ENCODE measurements at regions of chr2 and their contacts with region 1.

Region 1: DNA sequence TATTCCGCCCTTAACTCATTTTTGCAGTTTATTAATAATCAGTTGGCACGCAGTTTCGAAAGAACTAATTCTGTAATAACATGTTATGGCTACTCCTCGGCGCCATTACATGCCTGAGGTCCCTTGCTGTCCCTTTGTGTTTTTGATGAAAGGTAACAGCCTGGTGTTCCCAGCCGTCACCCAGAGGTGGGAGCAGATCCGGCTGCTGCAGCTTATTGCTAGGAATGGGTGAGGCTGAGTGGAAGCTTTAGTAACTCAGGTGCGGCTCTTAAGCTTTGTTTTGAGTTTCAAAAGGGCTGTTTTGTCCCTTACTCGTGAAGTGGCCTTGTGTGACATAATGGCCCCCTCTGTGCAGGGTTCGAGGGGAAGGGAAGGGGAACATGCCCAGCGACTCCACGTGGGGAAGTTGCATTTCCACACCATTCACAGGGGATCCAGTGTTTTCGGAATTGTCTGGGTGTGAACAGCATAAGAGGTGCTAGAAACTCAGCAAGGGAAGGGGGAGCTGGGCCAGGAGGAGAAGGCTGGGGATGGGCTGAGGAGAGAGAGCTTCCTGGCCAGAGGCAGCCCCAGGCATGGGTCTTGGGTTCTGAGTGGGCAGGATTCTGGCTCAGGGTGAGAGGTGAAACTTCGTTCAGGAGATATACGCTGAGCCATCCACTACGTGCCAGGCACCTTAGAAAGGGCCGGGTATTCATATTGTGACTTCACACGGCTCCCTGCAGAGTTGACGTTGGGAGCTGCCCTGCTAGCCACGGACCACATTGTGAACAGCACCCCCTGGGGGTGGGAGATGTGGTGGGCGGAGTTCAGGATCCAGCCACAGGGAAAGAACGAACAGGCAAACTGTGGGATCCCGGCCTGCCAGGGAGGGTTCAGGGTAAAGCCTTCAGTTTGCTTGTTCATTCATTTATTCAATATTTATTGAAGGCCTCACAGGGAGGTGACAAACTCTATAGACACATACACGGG is 84.4 kb downstream of the TGOLN2 start:
- DNase-seq: peak; percentile 77
- ATAC-seq: peak; percentile 56
- H3K4me3 Mint-ChIP-seq: no peak overlapping the region
- H3K27ac Mint-ChIP-seq: peak overlapping the region; percentile 67
- H3K4me1 Mint-ChIP-seq: peaks cover 87% of the 10 kb centered on the region
- H3K27me3 Mint-ChIP-seq: no peaks in the 10 kb centered on the region
- CTCF ChIP-seq: peak; percentile 53; the same call in 1 of the 2 replicates

Region 2: DNA sequence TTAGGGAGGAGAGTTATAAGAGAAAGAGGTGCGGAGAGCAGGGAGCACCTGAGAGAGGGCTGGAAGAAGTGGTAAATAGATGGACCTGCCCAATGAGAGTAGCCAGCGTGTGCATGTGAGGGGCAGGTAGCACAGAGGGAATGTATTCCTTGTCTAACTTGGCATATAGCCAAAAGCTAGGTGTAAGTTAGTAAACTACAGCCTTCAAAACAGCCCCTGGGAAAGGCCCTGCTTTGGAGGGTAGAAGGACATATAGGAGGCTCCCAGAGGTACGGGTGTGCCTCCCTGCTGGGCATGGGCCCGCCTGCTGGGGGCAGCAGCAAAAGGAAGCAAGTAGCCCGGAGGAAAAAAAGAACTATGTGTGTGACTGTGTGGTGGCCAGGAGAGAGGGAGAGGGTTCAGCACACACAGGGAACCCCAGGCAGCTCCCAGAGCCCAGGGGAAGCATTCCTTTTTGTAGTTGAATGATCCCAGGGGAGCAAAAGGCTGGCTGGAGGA is 62.2 kb before region 1 on chr2:
- CTCF ChIA-PET with region 1: interaction called, 14 read pairs
- POLR2A ChIA-PET with region 1: no interaction called
- DNase-seq: no peak
- ATAC-seq: no peak; the same call in 1 of the 2 replicates
- H3K4me3 Mint-ChIP-seq: no peak overlapping the region; the same call in 1 of the 2 replicates
- H3K27ac Mint-ChIP-seq: peak overlapping the region; percentile 84
- H3K4me1 Mint-ChIP-seq: peaks cover 92% of the 10 kb centered on the region
- H3K27me3 Mint-ChIP-seq: no peaks in the 10 kb centered on the region
- CTCF ChIP-seq: no peak

Measured in WTC11 (cell line).